Psoas muscle (tissue), 8 donors: ENCODE measurements at regions of chr1 and their contacts with region 1.

Region 1: GRCh38 chr1:36717431-36717830 is 234.7 kb upstream of the CSF3R start:
- DNase-seq: no peak
- ATAC-seq: no peak
- H3K4me3 ChIP-seq: no peak overlapping the region
- H3K27ac ChIP-seq: no peak overlapping the region
- H3K4me1 ChIP-seq: no peaks in the 10 kb centered on the region
- H3K27me3 ChIP-seq: peaks cover 0 to 21% (median 4%) of the 10 kb centered on the region in 3 donors
- CTCF ChIP-seq: no peak

Region 2: GRCh38 chr1:36675931-36676562 is 41.4 kb before region 1 on chr1:
- intact Hi-C with region 1: loop called in 1 of 2 experiments (anchors 2 kb)
- DNase-seq: no peak
- ATAC-seq: no peak
- H3K4me3 ChIP-seq: no peak overlapping the region
- H3K27ac ChIP-seq: no peak overlapping the region
- H3K4me1 ChIP-seq: no peaks in the 10 kb centered on the region
- H3K27me3 ChIP-seq: peaks cover 4 to 45% (median 4%) of the 10 kb centered on the region in 3 donors
- CTCF ChIP-seq: no peak